GM12878 (cell line): ENCODE measurements at regions of chr4 and their contacts with region 1.

Region 1: GRCh38 chr4:184649026-184649970 is at the starts of genes CASP3 and PRIMPOL:
- DNase-seq: peak; percentile 60
- ATAC-seq: peak; percentile 90
- H3K4me3 ChIP-seq: peak within 1 kb of the TSS; percentile 98
- H3K27ac ChIP-seq: peak within 1 kb of the TSS; percentile 85
- H3K4me1 ChIP-seq: peaks cover 12% of the 10 kb centered on the region; the same call in 1 of the 2 replicates
- H3K27me3 ChIP-seq: no peaks in the 10 kb centered on the region
- CTCF ChIP-seq: peak in 2 of 3 experiments; percentile 26 to 43; a peak in 3 of 6 replicates
- EP300 ChIP-seq: no peak
- POLR2A ChIP-seq: peak; percentile 93
- RAD21 ChIP-seq: peak; percentile 28
- polyA plus RNA-seq, gene CASP3: 50.0 to 59.0 TPM
- polyA plus RNA-seq, gene PRIMPOL: 10.6 to 11.5 TPM

Region 2: DNA sequence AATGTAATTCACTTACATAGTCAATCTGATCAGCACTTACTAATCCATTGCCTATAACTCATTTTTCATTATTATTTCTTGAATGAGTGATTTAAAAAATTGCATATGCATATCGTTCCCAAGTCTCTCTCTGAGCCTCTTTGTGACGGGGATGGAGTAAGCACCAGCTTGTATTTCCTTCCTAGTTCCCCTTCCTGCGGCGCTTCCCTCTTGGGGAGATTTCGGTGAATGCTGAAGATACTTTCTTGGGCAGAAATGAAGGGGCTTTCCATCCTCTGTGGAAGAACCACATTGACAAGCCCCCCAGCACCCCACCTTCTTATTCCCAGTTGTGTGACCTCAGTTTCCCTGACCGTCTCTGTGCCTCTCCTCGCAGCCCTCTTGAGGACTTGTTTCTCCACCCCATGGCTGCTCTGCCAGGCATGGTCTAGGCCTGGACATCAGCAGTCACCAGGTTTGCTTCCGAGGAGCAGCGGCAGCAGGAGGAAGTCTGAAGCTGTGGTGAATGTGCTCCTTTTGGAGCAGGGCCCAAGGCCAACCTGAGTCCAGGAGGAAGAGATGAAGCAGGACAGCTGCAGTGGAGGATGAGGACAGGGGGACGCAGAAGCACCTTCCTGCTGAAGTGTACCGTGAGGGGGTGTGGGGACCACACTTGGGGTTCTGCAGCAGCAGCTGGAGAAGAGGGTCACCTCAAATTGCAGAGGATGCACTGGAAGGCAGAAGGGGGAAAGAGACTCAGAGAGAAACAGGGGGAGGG is 299.8 kb before region 1 on chr4:
- CTCF ChIA-PET with region 1: no interaction called
- POLR2A ChIA-PET with region 1: interaction called, 3 read pairs
- RAD21 ChIA-PET with region 1: interaction called, 5 read pairs
- SMC1A ChIA-PET with region 1: interaction called, 3 read pairs
- in situ Hi-C with region 1: no loop called
- intact Hi-C with region 1: loop called (anchors 5 kb)
- DNase-seq: no peak
- ATAC-seq: no peak
- H3K4me3 ChIP-seq: peak overlapping the region; percentile 89
- H3K27ac ChIP-seq: peak overlapping the region; percentile 99
- H3K4me1 ChIP-seq: peaks cover 50% of the 10 kb centered on the region
- H3K27me3 ChIP-seq: no peaks in the 10 kb centered on the region
- CTCF ChIP-seq: no peak
- EP300 ChIP-seq: no peak
- POLR2A ChIP-seq: no peak
- RAD21 ChIP-seq: no peak

Region 3: GRCh38 chr4:184583738-184584502 is 65.4 kb before region 1 on chr4:
- CTCF ChIA-PET with region 1: no interaction called
- POLR2A ChIA-PET with region 1: interaction called, 5 read pairs
- RAD21 ChIA-PET with region 1: interaction called, 24 read pairs
- SMC1A ChIA-PET with region 1: interaction called, 6 read pairs
- in situ Hi-C with region 1: no loop called
- intact Hi-C with region 1: no loop called
- DNase-seq: peak; percentile 41
- ATAC-seq: peak; percentile 78
- H3K4me3 ChIP-seq: no peak overlapping the region
- H3K27ac ChIP-seq: peak overlapping the region; percentile 50
- H3K4me1 ChIP-seq: peaks cover 24% of the 10 kb centered on the region
- H3K27me3 ChIP-seq: no peaks in the 10 kb centered on the region
- CTCF ChIP-seq: no peak
- EP300 ChIP-seq: peak in 1 of 2 experiments; percentile 61; a peak in 2 of 4 replicates
- POLR2A ChIP-seq: no peak
- RAD21 ChIP-seq: no peak

Region 4: DNA sequence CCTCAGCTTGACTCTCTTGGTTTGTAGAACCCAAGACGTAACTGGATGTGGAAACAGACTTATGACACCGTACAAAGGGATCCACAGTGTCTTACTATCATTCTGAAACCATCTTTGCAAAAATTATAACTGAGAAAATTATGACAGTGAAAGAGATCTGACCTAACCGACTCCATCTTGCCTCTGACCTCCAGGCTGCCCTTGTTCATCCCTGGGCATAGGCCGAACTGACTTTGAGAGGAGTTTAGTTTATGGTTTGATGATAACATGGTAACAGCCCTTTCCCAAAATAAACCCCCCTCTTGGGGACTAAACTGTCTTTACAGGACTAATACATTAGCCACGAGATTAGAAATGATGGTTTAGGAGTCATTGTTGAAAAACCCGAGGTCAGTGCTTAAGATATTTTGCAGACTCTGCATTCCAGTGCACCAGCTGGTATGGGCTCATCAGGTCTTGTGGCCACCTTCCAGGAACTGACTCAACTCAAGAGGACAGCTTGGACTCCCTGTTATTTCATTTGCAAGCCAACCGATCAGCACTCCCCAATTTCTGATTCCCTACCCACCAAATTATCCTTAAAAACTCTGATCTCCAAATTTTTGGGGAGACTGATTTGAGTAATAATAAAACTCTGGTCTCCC is 49.7 kb before region 1 on chr4:
- CTCF ChIA-PET with region 1: no interaction called
- POLR2A ChIA-PET with region 1: no interaction called
- RAD21 ChIA-PET with region 1: no interaction called
- SMC1A ChIA-PET with region 1: no interaction called
- in situ Hi-C with region 1: loop called (anchors 10 kb)
- intact Hi-C with region 1: no loop called
- DNase-seq: no peak
- ATAC-seq: no peak
- H3K4me3 ChIP-seq: no peak overlapping the region
- H3K27ac ChIP-seq: no peak overlapping the region
- H3K4me1 ChIP-seq: no peaks in the 10 kb centered on the region
- H3K27me3 ChIP-seq: no peaks in the 10 kb centered on the region; a peak in 1 of 4 replicates
- CTCF ChIP-seq: no peak
- EP300 ChIP-seq: no peak
- POLR2A ChIP-seq: no peak
- RAD21 ChIP-seq: no peak

Region 5: GRCh38 chr4:184733654-184734524 is 84.6 kb after region 1 on chr4 and contains the start of gene CENPU:
- CTCF ChIA-PET with region 1: interaction called, 6 read pairs
- POLR2A ChIA-PET with region 1: interaction called, 12 read pairs
- RAD21 ChIA-PET with region 1: interaction called, 22 read pairs
- SMC1A ChIA-PET with region 1: interaction called, 5 read pairs
- in situ Hi-C with region 1: no loop called
- intact Hi-C with region 1: loop called (anchors 2 kb)
- DNase-seq: peak; percentile 94
- ATAC-seq: peak; percentile 93
- H3K4me3 ChIP-seq: peak within 1 kb of the TSS; percentile 91
- H3K27ac ChIP-seq: peak within 1 kb of the TSS; percentile 81
- H3K4me1 ChIP-seq: peaks cover 9% of the 10 kb centered on the region
- H3K27me3 ChIP-seq: no peaks in the 10 kb centered on the region
- CTCF ChIP-seq: no peak
- EP300 ChIP-seq: no peak
- POLR2A ChIP-seq: peak; percentile 91
- RAD21 ChIP-seq: 0 out of 2 replicates have a peak, but pooled peaks have one; percentile 22
- polyA plus RNA-seq, gene CENPU: 26.6 to 46.5 TPM

Region 6: DNA sequence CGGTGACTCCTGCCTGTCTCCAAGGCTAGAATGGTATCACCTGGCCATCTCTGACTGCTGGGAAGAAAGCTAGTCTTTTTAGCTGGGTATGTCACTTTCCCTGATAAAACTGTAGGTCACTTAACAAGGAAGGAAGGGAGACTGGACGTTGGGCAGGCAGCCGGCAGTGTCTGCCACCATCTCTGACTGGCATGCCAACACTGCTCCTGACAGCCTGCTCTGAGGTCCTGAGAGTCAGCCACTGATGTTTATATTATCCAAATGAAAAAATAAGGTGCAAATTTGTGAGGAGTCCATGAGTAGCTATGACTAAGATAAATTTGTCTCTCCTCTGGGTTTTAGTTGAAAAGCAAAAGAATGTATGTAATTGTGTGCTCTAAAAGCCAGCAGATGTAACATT is 637.3 kb after region 1 on chr4:
- CTCF ChIA-PET with region 1: no interaction called
- POLR2A ChIA-PET with region 1: no interaction called
- RAD21 ChIA-PET with region 1: no interaction called
- SMC1A ChIA-PET with region 1: no interaction called
- in situ Hi-C with region 1: no loop called
- intact Hi-C with region 1: no loop called
- DNase-seq: no peak
- ATAC-seq: no peak
- H3K4me3 ChIP-seq: no peak overlapping the region
- H3K27ac ChIP-seq: no peak overlapping the region
- H3K4me1 ChIP-seq: no peaks in the 10 kb centered on the region
- H3K27me3 ChIP-seq: no peaks in the 10 kb centered on the region
- CTCF ChIP-seq: no peak
- EP300 ChIP-seq: no peak
- POLR2A ChIP-seq: no peak
- RAD21 ChIP-seq: no peak